PC-9 (cell line): ENCODE measurements at regions of chr11 and their contacts with region 1.

Region 1: DNA sequence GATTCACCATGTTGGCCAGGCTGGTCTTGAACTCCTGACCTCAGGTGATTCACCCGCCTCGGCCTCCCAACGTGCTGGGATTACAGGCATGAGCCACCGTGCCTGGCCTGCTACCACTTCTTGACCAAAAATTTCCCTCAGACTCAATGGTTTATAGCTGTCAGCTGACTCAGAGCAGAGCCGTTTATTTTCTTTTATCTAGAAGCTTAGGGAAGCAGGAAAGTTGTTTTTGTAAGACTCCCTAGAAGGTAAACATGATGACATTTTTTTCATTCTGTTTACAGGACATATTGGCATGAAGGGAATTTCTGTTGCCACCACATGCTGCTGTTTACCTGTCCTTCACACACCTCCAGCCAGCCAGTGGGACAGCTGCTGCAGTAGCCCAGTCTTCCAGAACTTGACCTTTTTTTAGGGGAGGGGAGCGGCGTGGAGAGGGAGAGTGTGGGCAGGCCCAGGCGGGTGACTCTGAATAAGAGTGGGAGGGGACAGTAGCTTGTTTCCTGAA is 56.1 kb upstream of the PTPRJ start:
- DNase-seq: peak; percentile 93 to 100
- H3K4me3 ChIP-seq: no peak overlapping the region
- H3K27ac ChIP-seq: peak overlapping the region; percentile 74
- H3K4me1 ChIP-seq: peaks cover 28% of the 10 kb centered on the region
- H3K27me3 ChIP-seq: no peaks in the 10 kb centered on the region
- CTCF ChIP-seq: no peak

Region 2: GRCh38 chr11:47269002-47269828 is 655.0 kb before region 1 on chr11:
- CTCF ChIA-PET with region 1: no interaction called
- POLR2A ChIA-PET with region 1: no interaction called
- intact Hi-C with region 1: loop called (anchors 5 kb)
- DNase-seq: peak; percentile 83 to 89
- H3K4me3 ChIP-seq: peak overlapping the region; percentile 72
- H3K27ac ChIP-seq: peak overlapping the region; percentile 69
- H3K4me1 ChIP-seq: peaks cover 50% of the 10 kb centered on the region
- H3K27me3 ChIP-seq: no peaks in the 10 kb centered on the region
- CTCF ChIP-seq: peak; percentile 46

Region 3: DNA sequence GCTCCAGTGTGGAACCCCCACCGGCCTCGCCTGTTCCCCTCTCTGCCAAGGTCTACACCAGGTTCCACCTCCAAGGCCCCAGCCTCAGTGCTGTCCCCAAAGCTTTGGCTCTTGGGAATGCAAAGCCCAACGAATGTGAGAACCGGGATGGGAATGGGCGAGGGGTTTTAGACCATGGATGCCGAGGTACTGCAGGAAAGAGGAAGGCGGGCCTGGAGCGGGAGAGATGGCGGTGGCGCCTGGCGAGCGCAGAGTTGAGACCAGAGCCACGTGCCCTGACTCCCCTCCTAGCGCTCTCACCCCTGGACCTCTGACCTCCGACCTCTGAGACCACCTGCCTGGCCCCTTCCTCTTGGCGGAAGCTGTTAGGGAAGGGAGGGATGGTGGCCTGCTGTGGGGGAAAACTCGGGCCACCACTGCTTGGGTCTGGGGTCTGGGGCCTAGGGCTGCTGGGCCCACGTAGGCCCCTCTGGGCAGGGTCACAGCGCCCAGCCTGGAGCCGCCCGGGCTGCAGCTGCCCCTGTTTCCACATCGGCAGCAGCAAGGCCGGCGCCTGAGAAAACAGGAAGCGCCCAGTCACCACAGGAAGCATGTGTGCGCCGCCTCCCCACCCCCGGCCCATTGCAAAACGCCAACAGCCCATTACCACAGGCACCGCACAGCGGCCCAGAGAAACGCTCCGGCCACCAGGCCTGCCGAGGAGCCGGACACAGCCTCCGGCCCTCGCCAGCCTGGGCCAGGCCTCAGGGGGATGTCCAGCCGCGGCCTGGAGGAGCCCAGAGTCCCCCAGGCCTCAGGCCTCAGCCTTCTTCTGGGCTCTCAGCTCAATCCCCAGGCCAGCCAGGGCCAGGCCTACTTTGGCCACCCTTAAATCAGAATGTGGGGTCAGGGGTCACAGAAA is 529.7 kb before region 1 on chr11:
- CTCF ChIA-PET with region 1: no interaction called
- POLR2A ChIA-PET with region 1: no interaction called
- intact Hi-C with region 1: no loop called
- DNase-seq: no peak
- H3K4me3 ChIP-seq: no peak overlapping the region
- H3K27ac ChIP-seq: no peak overlapping the region
- H3K4me1 ChIP-seq: no peaks in the 10 kb centered on the region
- H3K27me3 ChIP-seq: no peaks in the 10 kb centered on the region
- CTCF ChIP-seq: no peak

Region 4: DNA sequence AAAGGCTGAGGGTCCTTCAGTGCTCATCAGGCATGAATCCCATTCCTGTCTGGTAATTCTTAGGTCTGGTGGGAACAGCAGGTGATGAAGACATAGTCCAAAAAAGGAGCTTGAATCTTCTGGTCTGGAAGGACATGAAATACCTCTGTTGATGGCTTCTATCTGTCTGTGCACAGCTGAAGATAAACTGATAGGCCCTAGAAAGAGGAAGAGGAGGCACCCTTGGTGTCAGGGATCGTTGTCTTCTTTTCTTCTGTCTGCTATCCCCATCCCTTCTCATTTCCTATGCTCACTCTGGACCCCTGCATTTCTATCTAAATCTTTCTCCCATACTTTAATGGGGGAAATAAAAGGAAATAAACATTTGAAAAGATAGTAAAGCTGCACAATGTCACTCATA is 218.5 kb before region 1 on chr11:
- CTCF ChIA-PET with region 1: no interaction called
- POLR2A ChIA-PET with region 1: no interaction called
- intact Hi-C with region 1: no loop called
- DNase-seq: no peak
- H3K4me3 ChIP-seq: no peak overlapping the region
- H3K27ac ChIP-seq: no peak overlapping the region
- H3K4me1 ChIP-seq: no peaks in the 10 kb centered on the region
- H3K27me3 ChIP-seq: no peaks in the 10 kb centered on the region
- CTCF ChIP-seq: no peak

Region 5: DNA sequence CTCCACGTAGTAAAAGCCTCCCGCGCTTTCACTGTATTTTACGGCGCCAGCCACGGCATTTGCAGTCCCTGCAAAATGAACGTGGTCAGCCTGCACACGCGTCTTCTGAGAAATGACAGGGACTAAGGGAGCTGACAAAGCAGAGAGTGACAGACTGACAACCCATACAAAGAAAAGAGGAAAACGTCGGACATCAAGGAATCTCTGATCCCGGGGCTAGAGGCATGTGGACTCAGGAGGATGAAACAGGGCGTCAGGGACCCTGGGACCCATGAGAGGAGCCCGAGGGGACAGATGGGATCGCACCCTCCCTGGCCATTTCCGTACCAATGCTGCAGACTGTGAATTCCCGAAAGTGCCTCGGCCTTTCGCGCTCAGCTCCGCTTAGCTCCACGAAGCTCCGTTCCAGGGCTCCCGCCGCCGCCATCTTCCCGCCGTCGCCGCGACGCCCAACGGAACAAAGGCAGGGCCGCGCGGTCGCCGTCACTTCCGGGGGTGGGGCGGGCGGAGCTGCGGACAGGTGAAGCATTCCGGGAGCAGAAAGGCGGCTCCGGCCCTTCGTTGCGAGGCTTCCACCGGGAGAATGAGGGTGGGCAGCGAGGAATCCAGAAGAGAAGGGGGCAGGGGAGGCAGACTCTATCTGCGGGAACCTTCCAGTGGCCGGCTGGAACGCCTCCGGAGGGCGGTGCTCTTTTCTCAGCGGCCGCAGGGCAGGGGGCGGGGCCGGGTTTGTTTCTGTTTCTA is 76.2 kb before region 1 on chr11 and contains the start of gene NUP160:
- CTCF ChIA-PET with region 1: no interaction called
- POLR2A ChIA-PET with region 1: interaction called, 3 read pairs
- intact Hi-C with region 1: loop called (anchors 2 kb)
- DNase-seq: peak; percentile 60 to 84
- H3K4me3 ChIP-seq: peak within 1 kb of the TSS; percentile 96
- H3K27ac ChIP-seq: peak within 1 kb of the TSS; percentile 72
- H3K4me1 ChIP-seq: peaks cover 16% of the 10 kb centered on the region
- H3K27me3 ChIP-seq: no peaks in the 10 kb centered on the region
- CTCF ChIP-seq: no peak
- total RNA-seq, gene NUP160: 61.7 and 73.2 TPM in 2 replicates

Region 6: DNA sequence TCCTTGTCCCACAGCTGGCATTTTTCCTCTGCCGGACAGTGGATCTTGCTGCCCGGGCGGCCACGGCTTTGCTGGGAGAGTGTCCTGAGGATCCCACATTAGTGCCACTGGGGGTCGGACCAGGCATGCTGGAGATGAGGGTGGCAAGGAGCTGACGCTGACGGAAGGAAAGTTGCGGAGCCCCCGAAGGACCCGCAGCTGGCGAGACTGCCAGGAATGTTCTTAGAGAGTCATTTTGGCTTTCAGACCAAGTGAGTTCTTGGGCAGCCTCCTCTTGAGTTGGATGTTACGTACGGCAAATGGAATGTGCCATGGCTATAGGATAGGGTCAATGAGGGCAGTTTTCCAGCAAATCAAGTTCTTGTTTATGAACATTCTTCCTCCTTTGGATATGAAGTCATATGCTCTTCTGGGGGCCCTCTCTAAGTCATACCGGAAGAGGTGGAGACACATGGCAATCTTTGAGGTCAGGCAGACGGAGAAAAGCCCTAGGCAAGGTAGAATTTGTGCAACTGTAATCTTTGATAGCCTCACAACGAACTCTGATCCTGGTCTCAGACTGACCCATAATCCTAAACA is 18.7 kb before region 1 on chr11:
- CTCF ChIA-PET with region 1: no interaction called
- POLR2A ChIA-PET with region 1: interaction called, 5 read pairs
- intact Hi-C with region 1: loop called (anchors 1 kb)
- DNase-seq: peak; percentile 69 to 91
- H3K4me3 ChIP-seq: no peak overlapping the region
- H3K27ac ChIP-seq: peak overlapping the region; percentile 38; the same call in 1 of the 2 replicates
- H3K4me1 ChIP-seq: peaks cover 6% of the 10 kb centered on the region
- H3K27me3 ChIP-seq: no peaks in the 10 kb centered on the region
- CTCF ChIP-seq: no peak

Region 7: DNA sequence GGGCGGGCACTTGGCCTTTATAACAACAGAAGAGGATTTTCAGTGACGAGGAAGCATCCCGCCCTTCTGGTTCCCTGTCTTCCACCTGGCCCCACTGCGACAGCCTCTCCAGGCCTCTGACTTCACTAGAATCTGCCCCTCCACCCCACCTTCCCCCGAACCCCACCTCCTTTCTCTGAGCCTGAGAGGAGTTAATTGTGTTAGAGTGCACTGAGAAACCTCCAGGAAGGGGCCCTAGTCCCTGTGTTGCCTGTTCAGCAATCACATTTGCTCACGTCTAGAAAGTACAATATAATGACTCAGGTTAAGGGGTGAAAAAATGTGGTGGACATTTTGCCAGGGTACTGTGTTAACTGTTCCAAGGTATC is 95.0 kb after region 1 on chr11:
- CTCF ChIA-PET with region 1: no interaction called
- POLR2A ChIA-PET with region 1: interaction called, 10 read pairs
- intact Hi-C with region 1: no loop called
- DNase-seq: peak in 1 of 2 experiments; percentile 46
- H3K4me3 ChIP-seq: no peak overlapping the region
- H3K27ac ChIP-seq: no peak overlapping the region
- H3K4me1 ChIP-seq: peaks cover 16% of the 10 kb centered on the region
- H3K27me3 ChIP-seq: no peaks in the 10 kb centered on the region
- CTCF ChIP-seq: no peak